Right ventricle myocardium inferior (tissue), 1 donor: ENCODE measurements at regions of chr11 and their contacts with region 1.

Region 1: DNA sequence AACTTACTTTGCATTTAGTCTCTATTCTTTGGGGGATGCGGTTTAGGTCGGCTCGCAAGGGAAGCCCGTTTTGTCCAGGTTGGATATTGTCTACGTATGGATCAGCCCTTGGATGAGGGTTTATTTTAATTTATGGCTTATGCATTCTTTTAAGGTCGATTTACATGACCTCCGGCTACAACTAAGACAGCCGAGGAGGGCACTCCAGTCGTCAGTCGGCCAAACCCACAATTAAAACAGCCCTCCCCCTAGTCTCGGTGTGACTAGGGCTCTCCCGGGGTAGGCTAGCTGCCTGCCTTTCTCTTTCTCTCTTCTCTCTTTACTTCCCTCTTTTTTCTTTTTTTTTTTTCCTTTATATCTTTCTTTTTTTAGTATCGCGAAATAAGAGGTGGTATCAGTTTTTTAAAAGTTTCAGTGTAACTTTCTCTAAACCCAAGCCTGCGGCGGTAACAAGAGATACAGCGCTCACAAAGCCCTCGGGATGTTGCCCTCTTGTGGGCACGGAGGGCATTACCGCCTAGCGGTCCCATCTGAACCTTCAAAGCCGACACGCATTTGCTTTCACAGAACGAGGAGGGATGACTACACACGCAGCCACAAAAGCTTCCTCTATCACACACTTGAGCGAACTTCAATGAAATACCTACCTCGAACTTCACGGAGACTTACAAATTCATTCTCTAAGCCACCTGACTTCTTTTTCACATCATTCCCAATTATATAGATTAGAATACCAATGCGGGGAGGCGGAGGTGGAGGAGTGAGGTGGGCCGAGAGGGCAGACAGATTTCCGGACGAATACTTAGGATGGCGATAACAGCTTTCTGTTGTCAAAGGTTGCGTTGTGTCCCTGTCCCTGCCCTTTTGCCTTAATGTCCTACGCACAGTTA is 132.3 kb upstream of the C11orf58 start:
- DNase-seq: peak; percentile 91
- ATAC-seq: peak; percentile 65

Region 2: DNA sequence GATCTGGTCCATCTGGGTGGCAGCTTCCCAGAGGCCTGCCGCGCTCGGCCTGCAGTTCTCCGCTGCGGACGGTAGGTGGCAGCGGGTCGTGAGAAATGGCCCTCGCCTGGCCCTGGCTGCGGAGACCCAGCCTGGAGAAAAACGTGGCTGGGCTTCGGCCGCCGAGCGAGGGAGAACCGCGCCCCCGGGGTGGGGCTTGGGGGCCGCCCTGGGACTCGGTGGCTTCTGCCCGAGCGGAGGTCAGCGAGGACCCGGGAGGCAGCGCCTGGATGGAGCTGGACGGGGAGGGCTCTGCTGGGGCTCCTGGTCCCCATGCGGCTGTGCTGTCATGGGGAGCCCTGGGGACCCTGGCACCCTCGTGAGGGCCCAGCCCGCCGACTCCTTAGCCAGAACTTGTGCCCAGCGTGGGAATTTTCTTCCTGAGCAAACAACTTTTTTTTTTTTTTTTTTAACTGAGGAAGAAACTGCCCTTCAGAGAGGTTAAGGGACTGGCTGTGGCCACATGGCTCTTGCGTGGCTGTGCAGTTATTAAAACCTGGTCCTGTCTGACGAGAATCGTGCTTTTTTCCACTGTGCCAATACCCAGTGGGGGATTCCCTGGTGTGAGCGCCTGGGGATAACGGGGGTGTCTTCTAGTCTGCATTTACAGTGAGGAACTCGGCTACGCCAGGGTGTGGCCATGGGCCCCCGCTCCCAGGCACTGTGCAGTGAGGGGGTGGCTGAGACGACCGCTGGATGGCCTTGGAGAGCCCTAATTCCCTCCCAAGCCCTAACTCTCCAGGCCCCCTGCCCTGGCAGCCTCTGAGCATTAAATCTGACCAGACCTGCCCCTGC is 955.8 kb before region 1 on chr11:
- intact Hi-C with region 1: loop called (anchors 2 kb)
- DNase-seq: peak; percentile 96
- ATAC-seq: peak; percentile 99

Region 3: DNA sequence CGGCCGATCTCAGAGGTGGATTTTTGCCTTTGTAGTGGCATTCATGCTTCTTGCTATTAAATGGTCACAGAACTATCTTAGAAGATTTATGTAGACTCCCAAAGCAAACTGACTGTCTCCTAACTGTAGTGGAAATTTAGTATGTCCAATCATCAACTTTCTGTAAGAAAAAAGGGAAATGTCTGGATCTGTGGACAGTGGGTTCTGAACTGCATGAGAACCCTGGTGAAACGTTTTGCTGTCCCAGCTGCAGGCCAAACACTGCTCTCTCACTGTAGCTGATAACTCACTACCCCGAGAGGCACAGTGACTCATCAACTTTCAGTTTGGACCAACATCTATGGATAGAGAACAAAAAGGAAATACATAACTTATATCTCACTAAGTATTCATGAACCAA is 636.9 kb before region 1 on chr11:
- intact Hi-C with region 1: loop called (anchors 10 kb)
- DNase-seq: no peak
- ATAC-seq: peak; percentile 88

Region 4: DNA sequence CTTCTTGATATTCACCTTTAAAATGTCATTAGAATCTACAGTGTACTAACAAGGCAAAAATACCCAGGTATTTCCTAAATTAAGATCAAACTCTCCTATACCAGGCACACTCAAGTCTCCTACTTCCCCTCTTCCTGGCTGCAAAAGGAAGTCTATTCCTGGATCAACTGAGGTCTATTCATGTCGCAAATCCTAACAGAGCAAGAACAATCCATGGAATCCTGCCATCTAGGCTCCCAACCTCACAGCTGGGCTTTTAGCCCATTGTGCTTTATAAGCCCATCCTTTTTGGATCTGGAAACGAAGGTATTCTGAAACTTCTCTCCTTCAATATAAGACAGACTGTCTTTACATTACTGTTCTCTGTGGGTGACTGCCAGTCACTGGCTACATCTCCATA is 411.6 kb before region 1 on chr11:
- intact Hi-C with region 1: loop called (anchors 2 kb)
- DNase-seq: no peak
- ATAC-seq: peak; percentile 86

Region 5: GRCh38 chr11:16239141-16240105 is 366.7 kb before region 1 on chr11:
- intact Hi-C with region 1: loop called (anchors 5 kb)
- DNase-seq: no peak
- ATAC-seq: peak; percentile 72

Region 6: DNA sequence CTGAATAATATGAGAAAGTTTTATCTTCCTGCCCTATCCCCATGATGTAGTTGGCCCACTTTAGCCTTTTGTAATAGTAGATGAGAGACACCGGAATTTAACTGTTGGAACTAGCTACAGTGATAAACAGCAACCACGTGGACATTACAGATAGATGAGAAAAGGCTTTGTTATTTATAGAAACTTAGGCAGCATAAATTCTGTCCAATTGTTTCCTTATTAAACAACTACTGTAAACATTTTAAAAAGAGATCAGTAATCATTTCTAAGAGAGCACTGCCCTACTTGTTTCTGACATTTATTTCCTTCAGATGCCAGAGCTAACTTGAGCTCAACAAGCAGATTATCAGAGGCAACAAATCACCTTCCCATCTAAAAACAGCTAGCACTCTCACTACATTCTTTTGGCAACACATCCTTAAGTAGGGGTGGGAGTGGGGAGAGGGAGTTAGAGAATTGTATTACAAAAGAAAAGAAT is 312.9 kb before region 1 on chr11:
- intact Hi-C with region 1: loop called (anchors 5 kb)
- DNase-seq: no peak
- ATAC-seq: peak; percentile 91

Region 7: GRCh38 chr11:16356057-16356760 is 249.9 kb before region 1 on chr11 and contains the start of gene SOX6:
- intact Hi-C with region 1: loop called (anchors 10 kb)
- DNase-seq: no peak
- ATAC-seq: peak; percentile 42
- total RNA-seq, gene SOX6: 14.1 TPM

Region 8: GRCh38 chr11:16468735-16469453 is 137.2 kb before region 1 on chr11:
- intact Hi-C with region 1: no loop called
- DNase-seq: no peak
- ATAC-seq: peak; percentile 81